ENCODE measurements at regions of chr5 and their contacts with region 1.

Region 1: GRCh38 chr5:23820765-23821471 is 313.5 kb downstream of the PRDM9 start:
- DNase-seq: no peak
- ATAC-seq: peak in 2 of 8 donors; percentile 50 to 53
- H3K4me3 ChIP-seq: no peak overlapping the region
- H3K27ac ChIP-seq: no peak overlapping the region
- H3K4me1 ChIP-seq: no peaks in the 10 kb centered on the region
- H3K27me3 ChIP-seq: no peaks in the 10 kb centered on the region
- CTCF ChIP-seq: peak in 6 of 9 donors; percentile 18 to 48 (median 37)

Region 2: DNA sequence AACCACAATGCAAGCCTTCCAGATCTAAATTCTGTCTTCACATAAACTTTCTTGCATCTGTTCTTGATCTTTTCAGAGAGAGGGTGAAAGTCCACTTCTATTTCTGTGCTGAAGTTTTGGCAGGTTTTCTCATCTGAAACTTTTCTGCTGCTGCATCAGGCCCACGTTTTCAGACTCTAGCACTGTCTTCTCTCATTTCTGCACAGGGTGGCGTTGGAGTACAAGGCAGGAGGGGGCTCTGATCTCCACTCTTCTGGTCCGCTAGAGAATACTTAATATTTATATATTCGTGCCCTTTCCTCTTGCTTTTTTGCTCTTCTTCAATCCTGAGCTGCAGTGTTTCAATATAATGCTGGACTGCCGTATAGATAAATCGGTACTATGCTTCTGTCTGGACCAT is 517.5 kb before region 1 on chr5:
- intact Hi-C with region 1: no loop called
- DNase-seq: no peak
- ATAC-seq: no peak
- H3K4me3 ChIP-seq: no peak overlapping the region
- H3K27ac ChIP-seq: no peak overlapping the region
- H3K4me1 ChIP-seq: no peaks in the 10 kb centered on the region
- H3K27me3 ChIP-seq: no peaks in the 10 kb centered on the region
- CTCF ChIP-seq: peak in 1 of 9 donors; percentile 12

Region 3: GRCh38 chr5:24103470-24104023 is 282.6 kb after region 1 on chr5:
- intact Hi-C with region 1: loop called in 2 of 10 experiments (anchors 10 kb)
- DNase-seq: no peak
- ATAC-seq: no peak
- H3K4me3 ChIP-seq: no peak overlapping the region
- H3K27ac ChIP-seq: no peak overlapping the region
- H3K4me1 ChIP-seq: no peaks in the 10 kb centered on the region
- H3K27me3 ChIP-seq: no peaks in the 10 kb centered on the region
- CTCF ChIP-seq: no peak

Region 4: GRCh38 chr5:24110004-24110615 is 289.2 kb after region 1 on chr5:
- intact Hi-C with region 1: loop called in 3 of 10 experiments (anchors 5 to 10 kb)
- DNase-seq: no peak
- ATAC-seq: no peak
- H3K4me3 ChIP-seq: no peak overlapping the region
- H3K27ac ChIP-seq: no peak overlapping the region
- H3K4me1 ChIP-seq: no peaks in the 10 kb centered on the region
- H3K27me3 ChIP-seq: no peaks in the 10 kb centered on the region
- CTCF ChIP-seq: peak in 7 of 9 donors; percentile 5 to 57 (median 41)